ENCODE measurements at regions of chr7 and their contacts with region 1.

Region 1: DNA sequence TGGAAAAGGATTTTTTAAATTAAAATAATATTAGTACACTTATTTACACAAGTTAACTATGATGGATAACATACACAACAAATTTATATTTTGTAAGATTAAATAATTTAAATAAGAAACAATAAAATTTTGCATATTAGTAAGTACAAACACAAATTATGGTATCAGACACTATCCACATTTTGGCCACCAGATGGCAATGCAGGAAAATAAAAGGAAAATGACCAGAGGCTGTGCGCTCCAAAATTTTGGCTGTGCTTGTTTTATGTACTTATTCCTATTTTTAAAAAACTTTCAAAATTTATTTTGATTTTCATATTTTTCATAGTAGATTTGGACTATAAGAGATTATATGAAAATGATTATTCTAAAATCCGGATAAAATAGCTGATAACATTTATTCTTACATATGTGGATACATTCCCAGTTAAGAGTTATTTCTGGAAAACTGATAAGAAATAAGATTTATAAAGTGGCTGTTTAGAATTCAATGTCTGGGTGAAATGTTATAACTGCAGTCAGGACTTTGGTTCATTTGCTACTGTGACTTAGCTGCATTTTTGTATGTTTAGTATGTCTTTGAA is 274.7 kb upstream of the HGF start:
- ATAC-seq: peak in 2 of 8 experiments; percentile 17 to 46
- H3K4me3 ChIP-seq: no peak overlapping the region
- H3K27ac ChIP-seq: no peak overlapping the region
- H3K4me1 ChIP-seq: no peaks in the 10 kb centered on the region

Region 2: DNA sequence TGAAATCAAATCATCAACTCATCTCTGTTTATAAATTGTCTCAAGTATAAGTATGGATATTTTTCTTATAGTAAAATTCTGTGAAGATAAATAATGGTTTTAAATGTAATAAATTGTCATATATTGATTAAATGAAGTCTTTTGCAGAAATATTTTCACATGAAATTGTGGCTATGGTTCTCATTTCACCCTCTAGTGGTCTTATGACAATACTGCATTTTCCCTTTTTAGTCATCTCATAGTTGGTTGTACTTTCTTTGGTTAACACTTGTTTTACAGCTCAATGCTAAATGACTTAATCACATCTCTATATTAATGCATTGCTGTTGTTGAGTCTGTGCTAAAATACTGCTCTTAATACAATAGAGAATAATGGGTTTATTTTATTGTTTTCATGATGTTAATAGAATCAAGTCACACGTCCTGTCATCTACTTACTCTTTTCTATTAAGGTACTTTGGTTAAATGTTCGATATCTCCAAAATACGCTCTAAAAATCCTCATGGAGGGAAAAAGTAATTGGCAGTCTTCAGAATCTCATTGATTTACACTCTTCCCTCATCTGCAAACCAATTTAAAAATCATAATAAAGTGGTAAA is 437.0 kb after region 1 on chr7:
- in situ Hi-C with region 1: loop called in 2 of 9 experiments (anchors 25 kb)
- ATAC-seq: no peak
- H3K4me3 ChIP-seq: no peak overlapping the region
- H3K27ac ChIP-seq: no peak overlapping the region
- H3K4me1 ChIP-seq: peaks cover 0 to 12% of the 10 kb centered on the region in 2 donors

Region 3: GRCh38 chr7:82572195-82572880 is 527.7 kb after region 1 on chr7:
- in situ Hi-C with region 1: loop called in 7 of 9 experiments (anchors 10 to 25 kb)
- ATAC-seq: peak; percentile 66 to 91 (median 77)
- H3K4me3 ChIP-seq: no peak overlapping the region
- H3K27ac ChIP-seq: no peak overlapping the region
- H3K4me1 ChIP-seq: no peaks in the 10 kb centered on the region

Region 4: GRCh38 chr7:82578430-82578829 is 533.8 kb after region 1 on chr7:
- in situ Hi-C with region 1: loop called in 7 of 9 experiments (anchors 10 to 25 kb)
- ATAC-seq: peak in 2 of 8 experiments; percentile 21 to 43
- H3K4me3 ChIP-seq: no peak overlapping the region
- H3K27ac ChIP-seq: no peak overlapping the region
- H3K4me1 ChIP-seq: no peaks in the 10 kb centered on the region

Region 5: DNA sequence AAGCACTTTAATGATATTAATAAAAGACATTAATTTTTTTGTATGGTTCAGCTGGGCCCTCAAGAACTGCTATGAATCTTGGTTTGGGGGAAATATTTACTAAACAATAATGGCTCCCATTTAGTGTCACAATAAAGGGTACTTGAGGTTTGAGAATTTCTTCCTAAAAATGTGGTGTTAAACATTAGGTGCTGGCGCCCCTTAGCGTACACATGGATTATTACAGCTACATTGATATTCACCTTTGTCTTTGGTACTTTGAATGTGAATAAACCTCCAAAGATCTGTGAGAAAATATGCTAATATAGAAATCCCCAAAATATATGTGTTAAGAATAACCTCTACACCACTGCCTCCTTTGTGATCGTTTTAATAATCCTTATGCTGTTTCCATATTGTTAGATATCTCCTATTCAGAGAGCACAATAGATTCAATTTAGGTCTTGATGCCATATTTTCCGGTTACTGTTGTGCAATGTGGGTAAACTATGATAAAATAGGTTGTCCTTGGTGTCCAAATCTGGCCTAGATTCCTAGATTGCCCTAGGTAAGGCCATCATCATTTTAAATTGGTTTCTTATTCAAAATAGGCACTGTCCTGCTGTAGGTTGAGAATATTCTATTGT is 560.8 kb after region 1 on chr7:
- in situ Hi-C with region 1: loop called in 1 of 9 experiments (anchors 25 kb)
- ATAC-seq: no peak
- H3K4me3 ChIP-seq: no peak overlapping the region
- H3K27ac ChIP-seq: no peak overlapping the region
- H3K4me1 ChIP-seq: peaks cover 6% of the 10 kb centered on the region in 2 donors

Region 6: GRCh38 chr7:82740246-82740848 is 695.8 kb after region 1 on chr7:
- in situ Hi-C with region 1: loop called in 6 of 9 experiments (anchors 25 kb)
- ATAC-seq: peak in 3 of 8 experiments; percentile 74 to 76 (median 74)
- H3K4me3 ChIP-seq: no peak overlapping the region
- H3K27ac ChIP-seq: no peak overlapping the region
- H3K4me1 ChIP-seq: no peaks in the 10 kb centered on the region